Head of caudate nucleus (tissue), 42 donors: ENCODE measurements at regions of chr1 and their contacts with region 1.

Region 1: GRCh38 chr1:184075055-184076029 is 23.8 kb downstream of the TSEN15 start:
- DNase-seq: peak in 24 of 42 donors; percentile 10 to 82 (median 56)

Region 2: GRCh38 chr1:183757061-183757460 is 318.3 kb before region 1 on chr1:
- intact Hi-C with region 1: no loop called
- DNase-seq: no peak

Region 3: GRCh38 chr1:184222652-184223052 is 147.3 kb after region 1 on chr1:
- intact Hi-C with region 1: loop called (anchors 5 kb)
- DNase-seq: peak in 41 of 42 donors; percentile 26 to 88 (median 68)

Region 4: GRCh38 chr1:184664042-184664655 is 588.8 kb after region 1 on chr1:
- intact Hi-C with region 1: loop called (anchors 10 kb)
- DNase-seq: peak; percentile 51 to 91 (median 80)